ENCODE measurements at regions of chr6 and their contacts with region 1.

Region 1: GRCh38 chr6:11824986-11825385 is 46.4 kb upstream of the ADTRP start:
- DNase-seq: peak in 1 of 9 experiments; percentile 27
- ATAC-seq: no peak
- H3K4me3 ChIP-seq: no peak overlapping the region
- H3K4me3 Mint-ChIP-seq: no peak overlapping the region
- H3K27ac ChIP-seq: no peak overlapping the region
- H3K27ac Mint-ChIP-seq: no peak overlapping the region
- H3K4me1 ChIP-seq: no peaks in the 10 kb centered on the region
- H3K4me1 Mint-ChIP-seq: peaks cover 3% of the 10 kb centered on the region
- H3K27me3 ChIP-seq: no peaks in the 10 kb centered on the region
- H3K27me3 Mint-ChIP-seq: peaks cover 2% of the 10 kb centered on the region
- CTCF ChIP-seq: no peak

Region 2: DNA sequence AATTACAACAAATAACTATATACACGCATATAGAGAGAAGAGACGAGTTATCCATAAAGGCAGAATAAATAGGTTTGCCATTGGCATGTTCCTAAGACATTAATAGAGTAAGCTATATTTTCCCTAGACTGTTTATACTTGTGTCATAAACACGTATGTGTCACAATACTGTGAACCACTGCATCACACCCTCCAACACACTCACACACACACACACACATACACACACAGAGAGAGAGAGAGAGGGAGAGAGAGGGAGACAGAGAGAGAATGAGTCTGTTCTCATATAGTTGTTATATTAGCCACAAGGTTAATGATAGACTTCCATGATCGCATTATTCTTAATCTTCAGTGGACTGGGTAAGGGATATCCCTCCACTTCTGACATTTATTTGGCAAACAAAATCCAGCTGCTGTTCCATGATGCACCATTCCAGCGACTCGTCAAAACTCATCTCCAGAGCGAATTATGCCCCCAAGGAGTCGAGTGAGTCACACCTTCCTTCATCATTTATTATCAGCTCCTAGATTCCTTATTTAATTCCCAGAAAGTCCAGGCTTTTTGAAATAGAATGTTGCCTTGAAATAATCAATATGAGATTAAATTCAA is 104.4 kb after region 1 on chr6:
- CTCF ChIA-PET with region 1: no interaction called
- POLR2A ChIA-PET with region 1: no interaction called
- intact Hi-C with region 1: no loop called
- DNase-seq: no peak
- ATAC-seq: no peak
- H3K4me3 ChIP-seq: no peak overlapping the region
- H3K4me3 Mint-ChIP-seq: no peak overlapping the region
- H3K27ac ChIP-seq: no peak overlapping the region
- H3K27ac Mint-ChIP-seq: no peak overlapping the region
- H3K4me1 ChIP-seq: no peaks in the 10 kb centered on the region
- H3K4me1 Mint-ChIP-seq: no peaks in the 10 kb centered on the region
- H3K27me3 ChIP-seq: no peaks in the 10 kb centered on the region
- H3K27me3 Mint-ChIP-seq: peaks cover 2% of the 10 kb centered on the region
- CTCF ChIP-seq: no peak

Region 3: DNA sequence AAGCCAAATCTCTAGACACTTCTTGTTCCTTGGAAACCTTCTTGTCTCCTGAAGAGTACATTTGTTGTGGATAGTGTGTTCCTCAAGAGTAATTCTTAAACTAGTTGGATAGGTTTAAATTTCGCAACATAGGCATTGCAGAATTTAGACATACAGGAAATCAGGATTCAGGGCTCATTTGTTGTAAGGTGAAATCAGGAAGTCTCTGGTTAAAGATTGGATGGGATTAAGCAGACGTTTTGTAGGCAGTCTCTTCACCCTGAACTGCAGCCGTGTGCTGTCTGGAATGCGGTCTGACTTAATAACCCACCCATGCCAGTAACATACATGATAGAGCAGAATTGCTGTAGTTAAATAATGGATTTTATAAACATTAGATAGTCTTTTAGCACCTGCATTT is 208.8 kb after region 1 on chr6:
- CTCF ChIA-PET with region 1: no interaction called
- POLR2A ChIA-PET with region 1: no interaction called
- intact Hi-C with region 1: loop called in 1 of 2 experiments (anchors 10 kb)
- DNase-seq: no peak
- ATAC-seq: no peak
- H3K4me3 ChIP-seq: no peak overlapping the region
- H3K4me3 Mint-ChIP-seq: no peak overlapping the region
- H3K27ac ChIP-seq: no peak overlapping the region
- H3K27ac Mint-ChIP-seq: no peak overlapping the region
- H3K4me1 ChIP-seq: peaks cover 25% of the 10 kb centered on the region
- H3K4me1 Mint-ChIP-seq: peaks cover 57% of the 10 kb centered on the region
- H3K27me3 ChIP-seq: no peaks in the 10 kb centered on the region
- H3K27me3 Mint-ChIP-seq: no peaks in the 10 kb centered on the region
- CTCF ChIP-seq: no peak

Region 4: GRCh38 chr6:12075067-12075563 is 250.1 kb after region 1 on chr6:
- CTCF ChIA-PET with region 1: no interaction called
- POLR2A ChIA-PET with region 1: no interaction called
- intact Hi-C with region 1: loop called (anchors 1 to 2 kb)
- DNase-seq: peak in 3 of 9 experiments; percentile 21 to 51 (median 36)
- ATAC-seq: peak; percentile 73
- H3K4me3 ChIP-seq: no peak overlapping the region
- H3K4me3 Mint-ChIP-seq: no peak overlapping the region
- H3K27ac ChIP-seq: no peak overlapping the region
- H3K27ac Mint-ChIP-seq: no peak overlapping the region
- H3K4me1 ChIP-seq: peaks cover 13% of the 10 kb centered on the region
- H3K4me1 Mint-ChIP-seq: peaks cover 48% of the 10 kb centered on the region
- H3K27me3 ChIP-seq: no peaks in the 10 kb centered on the region
- H3K27me3 Mint-ChIP-seq: no peaks in the 10 kb centered on the region
- CTCF ChIP-seq: peak; percentile 54

Measured in CD8-positive, alpha-beta T cell (primary cell).